ENCODE measurements at regions of chr15 and their contacts with region 1.

Region 1: DNA sequence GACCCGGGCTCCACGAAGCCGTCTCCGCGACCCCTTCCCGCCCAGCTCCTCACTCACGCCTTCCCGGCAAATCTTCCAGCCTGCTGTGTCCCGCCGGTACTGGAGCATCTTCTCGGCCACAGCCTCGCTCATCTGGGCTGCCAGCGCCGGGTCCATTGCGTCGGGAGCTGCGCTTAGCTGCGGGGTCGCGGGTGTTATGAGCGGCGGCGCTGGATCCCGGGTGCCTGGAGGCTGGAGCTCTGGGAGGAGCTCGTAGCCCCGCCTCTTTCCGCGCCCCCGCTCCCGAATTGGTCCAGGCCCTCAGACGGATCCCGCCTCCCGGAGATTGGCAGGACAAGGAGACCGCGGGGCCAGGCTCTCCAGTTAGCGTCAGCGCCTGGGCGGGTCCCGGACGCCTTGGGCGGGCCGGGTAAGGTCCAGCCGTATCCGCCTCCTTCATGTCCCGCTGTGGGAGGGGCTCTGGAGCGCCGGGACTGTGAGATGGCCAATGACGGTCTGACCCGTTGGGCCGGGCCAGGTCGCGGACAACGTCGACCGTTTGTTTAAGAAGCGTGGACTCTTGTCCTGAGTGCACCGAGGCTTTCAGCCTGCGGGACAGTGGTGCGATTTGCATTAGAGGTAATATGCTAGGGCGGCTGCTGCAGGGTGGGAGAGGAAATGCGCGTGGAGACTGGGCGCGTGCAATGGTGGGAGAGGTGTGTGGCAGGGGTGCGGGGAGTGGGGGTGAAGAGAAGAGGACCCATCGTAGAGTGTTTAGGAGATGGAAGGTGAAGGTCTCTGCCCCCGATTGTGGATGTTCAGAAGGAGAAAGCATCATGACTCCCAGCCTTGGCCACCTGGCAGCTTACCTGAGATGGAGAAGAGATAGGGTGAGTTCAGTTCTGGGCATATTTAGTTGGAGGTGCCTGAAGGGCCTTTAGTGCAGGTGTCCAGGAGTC is at the start of gene STARD5:
- DNase-seq: peak; percentile 69
- ATAC-seq: peak; percentile 100
- H3K4me3 ChIP-seq: peak within 1 kb of the TSS; percentile 89
- H3K27ac ChIP-seq: peak within 1 kb of the TSS; percentile 32
- H3K4me1 ChIP-seq: peaks cover 8% of the 10 kb centered on the region
- H3K27me3 ChIP-seq: no peaks in the 10 kb centered on the region
- CTCF ChIP-seq: no peak
- EP300 ChIP-seq: no peak
- POLR2A ChIP-seq: peak; percentile 95
- RAD21 ChIP-seq: no peak
- polyA plus RNA-seq, gene STARD5: 2.3 to 3.5 TPM

Region 2: DNA sequence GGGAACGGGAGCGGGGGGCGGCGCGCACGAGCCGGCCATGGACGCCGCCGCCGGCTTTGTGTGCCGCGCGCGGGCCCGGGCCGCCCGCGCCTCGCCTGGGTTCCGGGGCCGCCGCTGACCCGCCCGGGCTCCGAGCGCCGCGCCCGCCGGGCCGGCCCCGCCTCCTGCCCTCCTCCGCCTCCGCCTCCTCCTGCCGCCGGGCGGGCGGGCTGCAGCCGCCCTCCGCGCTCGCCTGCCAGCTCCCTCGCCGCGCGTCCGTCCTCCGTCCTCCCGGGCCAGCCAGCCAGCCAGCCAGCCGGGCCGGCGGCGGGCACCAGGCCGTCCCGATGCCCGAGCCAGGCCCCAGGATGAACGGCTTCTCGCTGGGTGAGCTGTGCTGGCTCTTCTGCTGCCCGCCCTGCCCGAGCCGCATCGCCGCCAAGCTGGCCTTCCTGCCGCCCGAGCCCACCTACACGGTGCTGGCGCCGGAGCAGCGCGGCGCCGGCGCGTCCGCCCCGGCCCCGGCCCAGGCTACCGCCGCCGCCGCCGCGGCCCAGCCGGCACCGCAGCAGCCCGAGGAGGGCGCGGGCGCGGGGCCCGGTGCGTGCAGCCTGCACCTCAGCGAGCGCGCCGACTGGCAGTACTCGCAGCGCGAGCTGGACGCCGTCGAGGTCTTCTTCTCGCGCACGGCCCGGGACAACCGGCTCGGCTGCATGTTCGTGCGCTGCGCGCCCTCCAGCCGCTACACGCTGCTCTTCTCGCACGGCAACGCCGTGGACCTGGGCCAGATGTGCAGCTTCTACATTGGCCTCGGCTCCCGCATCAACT is 628.9 kb before region 1 on chr15 and contains the start of gene ABHD17C:
- CTCF ChIA-PET with region 1: no interaction called
- POLR2A ChIA-PET with region 1: no interaction called
- RAD21 ChIA-PET with region 1: no interaction called
- SMC1A ChIA-PET with region 1: no interaction called
- in situ Hi-C with region 1: no loop called
- intact Hi-C with region 1: loop called (anchors 5 kb)
- DNase-seq: no peak
- ATAC-seq: peak; percentile 71
- H3K4me3 ChIP-seq: peak within 1 kb of the TSS; percentile 88
- H3K27ac ChIP-seq: 0 out of 2 replicates have a peak within 1 kb of the TSS, but pooled peaks have one; percentile 8
- H3K4me1 ChIP-seq: peaks cover 3% of the 10 kb centered on the region; the same call in 1 of the 2 replicates
- H3K27me3 ChIP-seq: no peaks in the 10 kb centered on the region
- CTCF ChIP-seq: peak in 1 of 3 experiments; percentile 13; a peak in 1 of 6 replicates
- EP300 ChIP-seq: no peak
- POLR2A ChIP-seq: no peak; the same call in none of the 2 replicates
- RAD21 ChIP-seq: no peak
- polyA plus RNA-seq, gene ABHD17C: 4.9 to 6.2 TPM

Region 3: GRCh38 chr15:81256916-81257315 is 67.3 kb before region 1 on chr15:
- CTCF ChIA-PET with region 1: no interaction called
- POLR2A ChIA-PET with region 1: no interaction called
- RAD21 ChIA-PET with region 1: no interaction called
- SMC1A ChIA-PET with region 1: no interaction called
- in situ Hi-C with region 1: no loop called
- intact Hi-C with region 1: no loop called
- DNase-seq: no peak
- ATAC-seq: no peak
- H3K4me3 ChIP-seq: no peak overlapping the region
- H3K27ac ChIP-seq: no peak overlapping the region
- H3K4me1 ChIP-seq: no peaks in the 10 kb centered on the region
- H3K27me3 ChIP-seq: peaks cover 3 to 4% of the 10 kb centered on the region in 2 experiments; a peak in 2 of 4 replicates
- CTCF ChIP-seq: peak in 2 of 3 experiments; percentile 12 to 25; a peak in 2 of 6 replicates
- EP300 ChIP-seq: no peak
- POLR2A ChIP-seq: no peak
- RAD21 ChIP-seq: peak; percentile 44

Region 4: GRCh38 chr15:81336568-81336967 is 12.4 kb after region 1 on chr15:
- CTCF ChIA-PET with region 1: interaction called, 19 read pairs
- POLR2A ChIA-PET with region 1: interaction called, 3 read pairs
- RAD21 ChIA-PET with region 1: interaction called, 7 read pairs
- SMC1A ChIA-PET with region 1: interaction called, 4 read pairs
- in situ Hi-C with region 1: no loop called
- intact Hi-C with region 1: no loop called
- DNase-seq: no peak
- ATAC-seq: peak; percentile 89
- H3K4me3 ChIP-seq: no peak overlapping the region
- H3K27ac ChIP-seq: no peak overlapping the region
- H3K4me1 ChIP-seq: no peaks in the 10 kb centered on the region; the same call in 1 of the 2 replicates
- H3K27me3 ChIP-seq: no peaks in the 10 kb centered on the region
- CTCF ChIP-seq: peak; percentile 57 to 73 (median 66); a peak in 5 of 6 replicates
- EP300 ChIP-seq: no peak
- POLR2A ChIP-seq: no peak
- RAD21 ChIP-seq: peak; percentile 83

Measured in GM12878 (cell line).